ENCODE measurements at regions of chr4 and their contacts with region 1.

Region 1: DNA sequence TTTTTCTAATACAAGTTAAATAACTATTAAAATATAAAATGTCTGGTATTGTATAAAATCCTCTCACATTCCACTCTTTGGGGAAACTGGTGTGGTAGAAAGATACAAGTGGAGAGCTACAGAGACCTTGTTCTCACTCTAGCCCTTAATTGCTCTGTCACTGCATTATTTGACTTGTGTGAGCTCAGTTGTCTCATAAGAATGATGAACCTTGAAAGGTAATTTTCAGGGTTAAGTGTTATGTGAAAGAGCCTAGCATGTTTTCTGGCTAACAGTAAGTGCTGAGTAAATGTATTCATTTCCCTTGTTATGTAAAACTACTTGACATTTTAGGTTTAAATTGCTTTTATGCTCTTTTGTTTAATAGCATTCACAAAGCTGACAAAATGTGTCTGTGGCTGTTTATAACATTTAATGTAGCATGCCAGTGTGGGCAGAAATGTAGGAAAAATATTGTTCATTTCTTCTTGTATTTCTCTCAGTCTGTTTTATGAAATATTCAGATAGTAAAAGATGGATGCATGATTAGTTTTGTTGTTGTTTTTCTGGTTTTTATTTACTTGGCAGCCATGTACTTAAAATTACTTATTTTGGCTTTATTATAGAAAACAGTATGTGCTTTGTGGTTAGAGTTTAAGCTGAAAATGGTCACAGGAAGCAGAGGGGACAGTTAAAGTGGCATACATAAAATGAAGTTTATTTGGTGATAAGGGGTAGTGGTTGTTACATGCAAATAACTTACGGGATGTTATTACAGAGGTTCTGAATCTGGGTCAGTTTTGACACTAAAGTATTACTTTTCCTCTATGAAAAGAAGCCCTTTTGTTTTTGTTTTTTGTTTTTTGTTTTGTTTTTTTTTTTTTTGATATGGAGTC is 29.2 kb downstream of the SLAIN2 start:
- DNase-seq: no peak
- ATAC-seq: no peak
- H3K4me3 ChIP-seq: no peak overlapping the region
- H3K27ac ChIP-seq: no peak overlapping the region
- H3K4me1 ChIP-seq: 0 out of 2 replicates have a peak, but pooled peaks cover under 1% of the 10 kb centered on the region
- H3K27me3 ChIP-seq: no peaks in the 10 kb centered on the region
- CTCF ChIP-seq: no peak

Region 2: GRCh38 chr4:48248559-48248953 is 121.9 kb before region 1 on chr4:
- CTCF ChIA-PET with region 1: no interaction called
- POLR2A ChIA-PET with region 1: interaction called, 16 read pairs
- in situ Hi-C with region 1: no loop called
- intact Hi-C with region 1: no loop called
- DNase-seq: no peak
- ATAC-seq: no peak
- H3K4me3 ChIP-seq: no peak overlapping the region
- H3K27ac ChIP-seq: no peak overlapping the region
- H3K4me1 ChIP-seq: no peaks in the 10 kb centered on the region
- H3K27me3 ChIP-seq: no peaks in the 10 kb centered on the region
- CTCF ChIP-seq: no peak

Region 3: DNA sequence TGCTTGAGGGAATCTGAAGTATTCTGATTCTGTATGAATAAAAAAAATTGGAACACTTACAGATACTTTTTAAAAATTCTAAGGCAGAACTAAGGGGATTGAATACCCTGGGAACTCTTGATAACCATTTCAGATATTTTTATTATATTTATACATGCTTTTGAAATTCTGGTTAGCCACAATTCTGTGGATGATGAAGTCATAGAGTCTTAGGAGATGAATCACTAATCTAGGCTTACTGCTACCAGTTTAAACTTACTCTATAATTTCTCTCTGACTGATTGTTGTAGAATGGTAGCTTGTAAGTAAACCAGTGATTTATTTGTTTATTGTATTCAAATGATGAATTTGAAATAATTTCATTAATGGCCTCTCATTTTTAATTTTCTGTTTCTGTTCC is 40.5 kb before region 1 on chr4:
- CTCF ChIA-PET with region 1: no interaction called
- POLR2A ChIA-PET with region 1: no interaction called
- in situ Hi-C with region 1: no loop called
- intact Hi-C with region 1: no loop called
- DNase-seq: no peak
- ATAC-seq: no peak
- H3K4me3 ChIP-seq: no peak overlapping the region
- H3K27ac ChIP-seq: no peak overlapping the region
- H3K4me1 ChIP-seq: no peaks in the 10 kb centered on the region
- H3K27me3 ChIP-seq: no peaks in the 10 kb centered on the region
- CTCF ChIP-seq: no peak

Measured in Panc1 (cell line).